CD4-positive, alpha-beta T cell (primary cell): ENCODE measurements at regions of chr13 and their contacts with region 1.

Region 1: GRCh38 chr13:31057403-31058033 is 104.2 kb downstream of the HSPH1 start:
- DNase-seq: no peak
- ATAC-seq: no peak
- H3K4me3 ChIP-seq: no peak overlapping the region
- H3K4me3 Mint-ChIP-seq: no peak overlapping the region
- H3K27ac ChIP-seq: no peak overlapping the region
- H3K27ac Mint-ChIP-seq: no peak overlapping the region
- H3K4me1 ChIP-seq: peaks cover 3% of the 10 kb centered on the region
- H3K4me1 Mint-ChIP-seq: no peaks in the 10 kb centered on the region
- H3K27me3 ChIP-seq: no peaks in the 10 kb centered on the region
- H3K27me3 Mint-ChIP-seq: peaks cover 6% of the 10 kb centered on the region
- CTCF ChIP-seq: no peak

Region 2: DNA sequence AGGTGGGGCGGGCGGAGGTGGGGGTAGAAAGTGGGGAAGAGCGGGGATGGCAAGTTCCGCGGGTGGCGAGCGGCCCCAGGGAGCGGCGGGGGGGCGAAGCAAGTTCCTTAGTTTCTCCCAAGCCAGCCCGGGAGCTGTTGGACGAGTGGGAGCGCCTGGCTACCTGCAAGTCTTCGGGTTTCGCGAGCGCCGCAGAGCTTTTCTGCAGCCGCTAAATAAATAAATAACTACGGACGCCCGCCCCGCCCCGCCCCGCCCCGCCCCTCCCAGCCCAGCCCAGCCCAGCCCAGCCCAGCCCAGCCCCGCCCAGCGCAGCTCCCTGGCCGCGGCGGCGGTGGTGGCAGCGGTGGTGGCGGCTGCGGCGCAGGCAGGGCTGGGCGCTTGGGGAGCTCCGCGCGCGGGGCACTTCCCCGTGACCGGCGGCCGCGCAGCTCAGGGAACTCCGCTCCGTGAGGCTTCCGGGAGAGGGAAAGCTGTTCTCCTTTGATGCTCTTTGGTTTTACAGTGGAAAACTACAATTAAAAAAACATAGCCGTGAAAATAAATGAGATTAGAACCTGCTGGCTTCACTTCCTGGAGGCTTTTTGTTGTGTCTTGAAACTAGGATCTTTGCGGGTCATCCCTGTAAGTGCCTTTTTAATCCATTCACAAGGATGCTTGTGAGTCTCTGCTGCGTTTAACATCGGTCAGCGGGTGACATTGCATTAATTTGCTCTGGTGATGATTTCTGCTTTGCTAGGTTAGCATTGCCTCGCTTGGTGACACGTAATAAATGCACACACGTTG is 635.3 kb before region 1 on chr13 and contains the start of gene UBE2L5:
- CTCF ChIA-PET with region 1: no interaction called
- POLR2A ChIA-PET with region 1: no interaction called
- intact Hi-C with region 1: no loop called
- DNase-seq: peak in 13 of 14 experiments; percentile 40 to 88 (median 60)
- ATAC-seq: peak; percentile 93
- H3K4me3 ChIP-seq: peak within 1 kb of the TSS; percentile 60
- H3K4me3 Mint-ChIP-seq: peak within 1 kb of the TSS; percentile 91
- H3K27ac ChIP-seq: peak within 1 kb of the TSS in 1 of 2 donors; percentile 46
- H3K27ac Mint-ChIP-seq: peak within 1 kb of the TSS; percentile 83
- H3K4me1 ChIP-seq: peaks cover 12% of the 10 kb centered on the region
- H3K4me1 Mint-ChIP-seq: peaks cover 26% of the 10 kb centered on the region
- H3K27me3 ChIP-seq: no peaks in the 10 kb centered on the region
- H3K27me3 Mint-ChIP-seq: no peaks in the 10 kb centered on the region
- CTCF ChIP-seq: no peak
- total RNA-seq, gene UBE2L5: 0.11 TPM in 1 of 2 experiments, not detected in the other

Region 3: DNA sequence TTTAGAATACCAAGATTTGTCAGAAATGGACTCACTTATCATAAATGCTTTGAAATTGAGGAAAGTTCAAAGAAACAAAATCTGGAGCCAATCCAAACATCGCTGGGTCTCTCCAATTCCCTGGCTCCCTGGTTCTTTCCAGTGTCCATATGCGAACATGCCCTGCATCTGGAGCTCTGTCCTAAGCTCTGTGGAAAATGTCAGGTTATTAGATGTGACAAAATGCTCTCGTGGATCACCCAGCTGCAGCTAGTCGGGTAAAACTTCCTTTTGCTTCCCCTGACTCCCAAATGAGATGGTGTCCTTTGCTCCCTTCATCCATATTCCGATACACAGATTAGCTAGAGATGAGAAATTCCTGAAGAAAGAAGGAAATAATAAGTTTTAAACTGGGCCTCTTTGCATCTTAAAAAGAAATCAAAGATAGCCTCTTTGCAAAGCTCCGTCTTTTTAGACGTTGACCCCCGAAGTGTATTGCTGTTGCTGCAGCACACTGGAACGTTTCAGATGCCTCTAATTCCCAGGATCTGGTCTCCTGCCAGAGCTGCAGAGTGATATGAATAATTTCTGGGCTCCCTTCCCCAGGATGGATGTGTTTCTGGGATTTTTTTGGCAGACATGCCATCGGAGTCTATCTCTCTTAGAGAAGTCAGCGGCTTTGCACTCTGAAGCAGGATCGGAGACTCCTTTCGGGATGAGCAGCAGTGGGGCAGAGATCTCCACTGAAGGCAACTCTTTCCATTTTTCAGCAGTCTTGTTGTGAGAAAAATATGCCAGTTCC is 22.1 kb before region 1 on chr13:
- CTCF ChIA-PET with region 1: no interaction called
- POLR2A ChIA-PET with region 1: no interaction called
- intact Hi-C with region 1: loop called in 1 of 2 experiments (anchors 2 kb)
- DNase-seq: no peak
- ATAC-seq: no peak
- H3K4me3 ChIP-seq: no peak overlapping the region
- H3K4me3 Mint-ChIP-seq: no peak overlapping the region
- H3K27ac ChIP-seq: no peak overlapping the region
- H3K27ac Mint-ChIP-seq: no peak overlapping the region
- H3K4me1 ChIP-seq: peaks cover 14% of the 10 kb centered on the region
- H3K4me1 Mint-ChIP-seq: peaks cover 28% of the 10 kb centered on the region
- H3K27me3 ChIP-seq: peaks cover 0 to 3% of the 10 kb centered on the region in 2 experiments
- H3K27me3 Mint-ChIP-seq: no peaks in the 10 kb centered on the region
- CTCF ChIP-seq: no peak

Region 4: DNA sequence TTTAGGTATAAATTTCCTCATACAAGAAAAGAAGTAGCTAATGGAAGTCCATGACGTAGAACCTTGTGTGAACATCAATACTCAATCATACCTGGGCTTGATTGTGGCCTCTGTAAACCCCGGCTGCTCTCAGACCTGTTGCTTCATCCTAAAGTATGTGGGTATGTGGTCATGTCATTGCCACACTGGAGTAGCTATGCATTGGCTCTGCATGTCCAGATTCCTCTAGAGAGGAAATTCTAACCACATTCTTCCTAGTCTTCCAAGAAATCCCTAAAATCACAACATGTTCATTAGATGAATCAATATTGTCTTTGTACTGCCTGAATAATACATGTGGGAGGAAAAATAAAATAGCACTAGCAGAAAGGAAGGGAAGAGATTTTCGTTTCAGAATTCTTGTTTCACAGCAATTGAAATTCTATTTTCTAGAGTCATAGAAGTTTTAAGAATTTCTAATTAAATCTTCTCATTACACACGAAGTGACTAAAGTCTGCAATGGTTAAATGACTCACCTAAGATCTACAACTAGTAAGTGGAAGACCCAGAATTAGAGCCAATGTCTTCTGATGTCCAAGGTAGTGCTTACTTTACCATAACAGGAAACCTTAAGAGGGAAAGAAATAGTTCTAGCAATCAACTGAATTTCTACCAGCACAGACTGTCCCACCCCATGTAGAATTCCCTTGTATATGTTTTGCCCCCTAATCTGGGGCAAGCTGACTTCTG is 709.8 kb after region 1 on chr13:
- CTCF ChIA-PET with region 1: no interaction called
- POLR2A ChIA-PET with region 1: no interaction called
- intact Hi-C with region 1: no loop called
- DNase-seq: no peak
- ATAC-seq: no peak
- H3K4me3 ChIP-seq: no peak overlapping the region
- H3K4me3 Mint-ChIP-seq: no peak overlapping the region
- H3K27ac ChIP-seq: no peak overlapping the region
- H3K27ac Mint-ChIP-seq: no peak overlapping the region
- H3K4me1 ChIP-seq: no peaks in the 10 kb centered on the region
- H3K4me1 Mint-ChIP-seq: no peaks in the 10 kb centered on the region
- H3K27me3 ChIP-seq: peaks cover 0 to 4% of the 10 kb centered on the region in 2 experiments
- H3K27me3 Mint-ChIP-seq: peaks cover 4% of the 10 kb centered on the region
- CTCF ChIP-seq: no peak